Endothelial cell of umbilical vein (primary cell): ENCODE measurements at regions of chr2 and their contacts with region 1.

Region 1: GRCh38 chr2:235116885-235117492 is 165.2 kb downstream of the SH3BP4 start:
- DNase-seq: peak; percentile 53
- H3K4me3 ChIP-seq: no peak overlapping the region
- H3K27ac ChIP-seq: no peak overlapping the region
- H3K4me1 ChIP-seq: no peaks in the 10 kb centered on the region
- H3K27me3 ChIP-seq: peaks cover 2 to 9% of the 10 kb centered on the region in 2 experiments
- CTCF ChIP-seq: peak; percentile 35 to 37
- POLR2A ChIP-seq: no peak

Region 2: GRCh38 chr2:234135720-234136221 is 981.2 kb before region 1 on chr2:
- CTCF ChIA-PET with region 1: interaction called, 23 read pairs
- POLR2A ChIA-PET with region 1: no interaction called
- dilution Hi-C with region 1: no loop called
- intact Hi-C with region 1: loop called (anchors 1 kb)
- DNase-seq: peak; percentile 73
- H3K4me3 ChIP-seq: no peak overlapping the region
- H3K27ac ChIP-seq: no peak overlapping the region
- H3K4me1 ChIP-seq: peaks cover 16% of the 10 kb centered on the region
- H3K27me3 ChIP-seq: peaks cover 3 to 9% of the 10 kb centered on the region in 2 experiments
- CTCF ChIP-seq: peak; percentile 68 to 79
- POLR2A ChIP-seq: no peak

Region 3: GRCh38 chr2:234512884-234513669 is 603.9 kb before region 1 on chr2:
- CTCF ChIA-PET with region 1: interaction called, 26 read pairs
- POLR2A ChIA-PET with region 1: no interaction called
- dilution Hi-C with region 1: no loop called
- intact Hi-C with region 1: loop called (anchors 2 kb)
- DNase-seq: peak; percentile 14
- H3K4me3 ChIP-seq: no peak overlapping the region
- H3K27ac ChIP-seq: no peak overlapping the region
- H3K4me1 ChIP-seq: no peaks in the 10 kb centered on the region
- H3K27me3 ChIP-seq: peaks cover 2 to 5% of the 10 kb centered on the region in 2 experiments
- CTCF ChIP-seq: no peak
- POLR2A ChIP-seq: no peak

Region 4: GRCh38 chr2:234550511-234551107 is 566.4 kb before region 1 on chr2:
- CTCF ChIA-PET with region 1: interaction called, 216 read pairs
- POLR2A ChIA-PET with region 1: no interaction called
- dilution Hi-C with region 1: loop called (anchors 25 kb)
- intact Hi-C with region 1: loop called (anchors 1 kb)
- DNase-seq: peak; percentile 76
- H3K4me3 ChIP-seq: no peak overlapping the region
- H3K27ac ChIP-seq: no peak overlapping the region
- H3K4me1 ChIP-seq: no peaks in the 10 kb centered on the region
- H3K27me3 ChIP-seq: peaks cover 0 to 6% of the 10 kb centered on the region in 2 experiments
- CTCF ChIP-seq: peak; percentile 84 to 87
- POLR2A ChIP-seq: no peak

Region 5: GRCh38 chr2:234577191-234577590 is 539.8 kb before region 1 on chr2:
- CTCF ChIA-PET with region 1: interaction called, 10 read pairs
- POLR2A ChIA-PET with region 1: no interaction called
- dilution Hi-C with region 1: loop called (anchors 25 kb)
- intact Hi-C with region 1: no loop called
- DNase-seq: no peak
- H3K4me3 ChIP-seq: no peak overlapping the region
- H3K27ac ChIP-seq: no peak overlapping the region
- H3K4me1 ChIP-seq: no peaks in the 10 kb centered on the region
- H3K27me3 ChIP-seq: peaks cover 0 to 5% of the 10 kb centered on the region in 2 experiments
- CTCF ChIP-seq: no peak
- POLR2A ChIP-seq: no peak

Region 6: DNA sequence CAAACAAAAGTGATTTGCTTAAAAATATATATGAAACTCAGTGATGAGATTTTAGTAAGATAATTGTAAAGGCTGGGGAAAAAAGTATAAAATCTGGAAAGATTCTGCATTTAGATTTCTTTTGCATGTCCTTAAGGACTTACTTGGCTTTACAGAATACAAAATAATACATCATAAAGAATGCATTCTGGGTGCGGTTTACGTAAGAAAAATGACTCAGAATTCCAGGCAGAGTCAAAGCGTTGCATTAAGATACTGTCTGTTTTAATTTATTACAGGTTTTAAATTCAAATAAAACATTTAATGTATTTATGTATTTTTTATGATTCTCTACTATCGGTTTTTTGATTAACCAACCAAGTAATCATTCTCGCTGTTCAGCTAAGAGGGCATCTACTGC is 12.9 kb after region 1 on chr2:
- CTCF ChIA-PET with region 1: interaction called, 21 read pairs
- POLR2A ChIA-PET with region 1: no interaction called
- dilution Hi-C with region 1: no loop called
- intact Hi-C with region 1: no loop called
- DNase-seq: no peak
- H3K4me3 ChIP-seq: no peak overlapping the region
- H3K27ac ChIP-seq: no peak overlapping the region
- H3K4me1 ChIP-seq: peaks cover 2% of the 10 kb centered on the region
- H3K27me3 ChIP-seq: peaks cover 4% of the 10 kb centered on the region in 2 experiments
- CTCF ChIP-seq: no peak
- POLR2A ChIP-seq: no peak

Region 7: GRCh38 chr2:235162081-235162836 is 45.3 kb after region 1 on chr2:
- CTCF ChIA-PET with region 1: no interaction called
- POLR2A ChIA-PET with region 1: no interaction called
- dilution Hi-C with region 1: no loop called
- intact Hi-C with region 1: no loop called
- DNase-seq: no peak
- H3K4me3 ChIP-seq: no peak overlapping the region
- H3K27ac ChIP-seq: no peak overlapping the region
- H3K4me1 ChIP-seq: no peaks in the 10 kb centered on the region
- H3K27me3 ChIP-seq: no peaks in the 10 kb centered on the region
- CTCF ChIP-seq: no peak
- POLR2A ChIP-seq: no peak